Naive thymus-derived CD4-positive, alpha-beta T cell (primary cell): ENCODE measurements at regions of chr7 and their contacts with region 1.

Region 1: DNA sequence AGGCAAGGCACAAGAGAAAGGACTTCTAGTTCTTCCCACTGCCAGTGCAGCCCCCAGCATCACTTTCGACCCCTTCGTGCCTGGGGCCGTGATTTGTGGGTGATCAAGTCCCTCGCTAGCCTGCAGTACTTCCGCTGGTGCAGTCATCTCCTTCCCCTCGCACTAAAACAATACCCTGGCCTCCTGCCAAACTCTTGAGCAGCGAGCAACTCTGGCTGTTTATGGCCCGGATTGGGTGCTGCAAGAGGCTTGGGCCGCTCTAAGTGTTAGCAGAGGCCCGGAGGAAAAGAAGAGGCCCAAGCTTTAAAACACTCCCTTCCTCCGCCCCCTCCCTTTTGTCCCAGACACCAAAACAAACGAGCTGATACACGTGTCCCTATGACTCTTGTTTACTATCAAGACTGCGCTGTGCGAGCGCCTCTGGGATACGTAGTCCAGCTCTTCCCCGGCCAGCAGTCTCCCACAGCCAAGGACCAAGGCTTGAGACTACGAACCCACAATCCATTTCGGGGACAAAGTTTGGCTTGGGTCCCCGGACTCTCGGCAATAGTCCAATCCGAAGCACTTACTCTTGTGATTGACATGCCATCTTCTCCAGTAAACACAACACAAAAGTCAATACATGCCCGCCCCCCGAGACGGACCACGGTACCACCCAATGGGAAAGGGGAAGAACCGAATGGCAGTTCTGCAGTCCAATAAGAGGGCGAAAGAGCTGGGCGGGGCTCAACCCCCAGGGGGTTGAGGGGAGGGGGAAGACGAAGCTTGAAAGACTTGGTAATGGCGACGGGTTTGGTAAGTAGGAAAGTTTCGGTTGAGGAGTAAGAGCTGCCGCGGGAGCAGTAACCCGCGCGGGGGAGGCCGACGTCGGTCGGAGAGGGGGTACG is at the start of gene HBP1:
- DNase-seq: peak; percentile 80 to 100 (median 99)
- ATAC-seq: peak; percentile 87
- H3K4me3 ChIP-seq: peak within 1 kb of the TSS; percentile 84
- H3K4me3 Mint-ChIP-seq: peak within 1 kb of the TSS; percentile 92 to 100 (median 96)
- H3K27ac ChIP-seq: peak within 1 kb of the TSS; percentile 100
- H3K27ac Mint-ChIP-seq: peak within 1 kb of the TSS; percentile 98 to 100 (median 99)
- H3K4me1 ChIP-seq: peaks cover 28 to 35% of the 10 kb centered on the region in 2 donors
- H3K4me1 Mint-ChIP-seq: peaks cover 25 to 50% (median 41%) of the 10 kb centered on the region in 7 donors
- H3K27me3 ChIP-seq: no peaks in the 10 kb centered on the region
- H3K27me3 Mint-ChIP-seq: peaks cover 0 to 28% (median 0%) of the 10 kb centered on the region in 5 donors
- total RNA-seq, gene HBP1: 34.6 to 219 (median 124) TPM

Region 2: GRCh38 chr7:105487579-105488571 is 1680.6 kb before region 1 on chr7:
- CTCF ChIA-PET with region 1: no interaction called
- POLR2A ChIA-PET with region 1: no interaction called
- intact Hi-C with region 1: no loop called
- DNase-seq: peak in 4 of 9 donors; percentile 4 to 31 (median 19)
- ATAC-seq: no peak
- H3K4me3 ChIP-seq: no peak overlapping the region
- H3K4me3 Mint-ChIP-seq: no peak overlapping the region
- H3K27ac ChIP-seq: no peak overlapping the region
- H3K27ac Mint-ChIP-seq: peak overlapping the region in 1 of 9 donors; percentile 20
- H3K4me1 ChIP-seq: no peaks in the 10 kb centered on the region
- H3K4me1 Mint-ChIP-seq: peaks cover 0 to 8% (median 0%) of the 10 kb centered on the region in 7 donors
- H3K27me3 ChIP-seq: no peaks in the 10 kb centered on the region
- H3K27me3 Mint-ChIP-seq: no peaks in the 10 kb centered on the region

Region 3: DNA sequence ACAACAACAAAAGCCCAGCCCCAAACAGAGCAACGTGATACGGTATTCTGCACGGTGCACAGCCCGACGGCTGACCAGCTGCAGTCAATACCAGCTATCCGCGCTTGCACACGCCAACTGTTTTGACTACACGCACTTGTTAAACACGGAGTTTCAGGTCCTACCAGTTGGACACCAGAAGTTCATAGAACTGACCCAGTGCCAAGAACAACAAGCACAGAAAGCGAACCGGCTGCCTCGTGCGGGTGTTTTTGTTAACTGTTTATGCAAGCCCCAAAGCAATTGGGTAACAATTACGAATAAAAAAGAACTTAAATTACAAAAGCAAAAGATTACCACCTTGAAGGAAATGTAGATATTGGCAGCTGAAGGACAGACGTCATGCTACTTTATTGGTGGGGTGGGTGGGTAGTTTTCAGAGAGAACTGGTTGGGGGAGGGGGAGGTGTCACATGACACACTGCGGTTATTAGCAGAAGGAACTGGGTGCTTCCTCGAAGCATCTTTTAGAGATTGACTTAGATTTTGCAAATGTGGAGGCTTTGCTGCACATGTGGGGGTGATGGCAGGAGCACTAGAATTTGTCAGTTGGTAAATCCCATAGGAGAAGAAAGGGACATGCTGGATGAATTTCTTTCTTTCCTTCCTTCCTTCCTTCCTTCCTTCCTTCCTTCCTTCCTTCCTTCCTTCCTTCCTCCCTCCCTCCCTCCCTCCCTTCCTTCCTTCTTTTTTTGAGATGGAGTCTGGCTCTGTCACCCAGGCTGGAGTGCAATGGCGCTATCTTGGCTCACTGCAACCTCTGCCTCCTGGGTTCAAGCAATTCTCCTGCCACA is 1476.5 kb before region 1 on chr7:
- CTCF ChIA-PET with region 1: no interaction called
- POLR2A ChIA-PET with region 1: interaction called, 4 read pairs
- intact Hi-C with region 1: loop called in 1 of 2 experiments (anchors 2 kb)
- DNase-seq: peak; percentile 22 to 94 (median 90)
- ATAC-seq: peak; percentile 89
- H3K4me3 ChIP-seq: peak overlapping the region; percentile 94
- H3K4me3 Mint-ChIP-seq: peak overlapping the region; percentile 84 to 98 (median 92)
- H3K27ac ChIP-seq: peak overlapping the region; percentile 83
- H3K27ac Mint-ChIP-seq: peak overlapping the region; percentile 95 to 100 (median 99)
- H3K4me1 ChIP-seq: peaks cover 19 to 21% of the 10 kb centered on the region in 2 donors
- H3K4me1 Mint-ChIP-seq: peaks cover 33 to 78% (median 65%) of the 10 kb centered on the region in 7 donors
- H3K27me3 ChIP-seq: no peaks in the 10 kb centered on the region
- H3K27me3 Mint-ChIP-seq: no peaks in the 10 kb centered on the region

Region 4: GRCh38 chr7:106598663-106599342 is 569.7 kb before region 1 on chr7:
- CTCF ChIA-PET with region 1: no interaction called
- POLR2A ChIA-PET with region 1: interaction called, 4 read pairs
- intact Hi-C with region 1: loop called (anchors 2 to 5 kb)
- DNase-seq: peak; percentile 19 to 80 (median 72)
- ATAC-seq: peak; percentile 100
- H3K4me3 ChIP-seq: no peak overlapping the region
- H3K4me3 Mint-ChIP-seq: peak overlapping the region in 8 of 10 donors; percentile 18 to 75 (median 66)
- H3K27ac ChIP-seq: no peak overlapping the region
- H3K27ac Mint-ChIP-seq: peak overlapping the region in 5 of 9 donors; percentile 52 to 69 (median 58)
- H3K4me1 ChIP-seq: no peaks in the 10 kb centered on the region
- H3K4me1 Mint-ChIP-seq: peaks cover 0 to 9% (median 6%) of the 10 kb centered on the region in 7 donors
- H3K27me3 ChIP-seq: no peaks in the 10 kb centered on the region
- H3K27me3 Mint-ChIP-seq: peaks cover 0 to 14% (median 5%) of the 10 kb centered on the region in 5 donors

Region 5: DNA sequence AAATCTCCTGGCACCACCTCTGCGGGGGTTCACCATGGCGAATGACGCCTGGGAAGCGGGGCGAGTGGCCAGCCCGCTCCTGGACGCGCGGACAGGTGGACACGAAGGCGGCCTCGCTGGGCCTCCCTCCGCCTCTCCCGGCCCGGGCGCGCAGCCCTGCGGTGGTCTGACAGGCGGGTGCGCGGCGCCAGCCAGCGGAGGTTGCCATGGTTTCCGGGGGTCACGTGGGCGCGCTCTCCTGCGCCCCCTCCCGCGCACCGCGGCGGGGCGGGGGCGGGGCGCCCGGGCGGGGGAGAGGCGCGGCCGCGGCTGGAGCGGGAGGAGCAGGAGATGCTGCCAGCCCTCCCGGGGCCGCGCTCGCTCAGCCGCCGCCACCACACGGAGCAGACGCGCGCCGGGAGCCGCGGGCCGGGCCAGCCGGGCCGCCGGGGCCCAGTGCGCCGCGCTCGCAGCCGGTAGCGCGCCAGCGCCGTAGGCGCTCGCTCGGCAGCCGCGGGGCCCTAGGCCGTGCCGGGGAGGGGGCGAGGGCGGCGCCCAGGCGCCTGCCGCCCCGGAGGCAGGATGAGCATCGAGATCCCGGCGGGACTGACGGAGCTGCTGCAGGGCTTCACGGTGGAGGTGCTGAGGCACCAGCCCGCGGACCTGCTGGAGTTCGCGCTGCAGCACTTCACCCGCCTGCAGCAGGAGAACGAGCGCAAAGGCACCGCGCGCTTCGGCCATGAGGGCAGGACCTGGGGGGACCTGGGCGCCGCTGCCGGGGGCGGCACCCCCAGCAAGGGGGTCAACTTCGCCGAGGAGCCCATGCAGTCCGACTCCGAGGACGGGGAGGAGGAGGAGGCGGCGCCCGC is 123.9 kb before region 1 on chr7 and contains the start of gene PRKAR2B:
- CTCF ChIA-PET with region 1: no interaction called
- POLR2A ChIA-PET with region 1: no interaction called
- intact Hi-C with region 1: loop called (anchors 1 kb)
- DNase-seq: peak; percentile 69 to 81 (median 79)
- ATAC-seq: peak; percentile 96
- H3K4me3 ChIP-seq: peak within 1 kb of the TSS; percentile 53
- H3K4me3 Mint-ChIP-seq: peak within 1 kb of the TSS; percentile 78 to 96 (median 90)
- H3K27ac ChIP-seq: peak within 1 kb of the TSS; percentile 33
- H3K27ac Mint-ChIP-seq: peak within 1 kb of the TSS in 7 of 9 donors; percentile 48 to 89 (median 77)
- H3K4me1 ChIP-seq: peaks cover 4 to 10% of the 10 kb centered on the region in 2 donors
- H3K4me1 Mint-ChIP-seq: peaks cover 11 to 19% (median 15%) of the 10 kb centered on the region in 7 donors
- H3K27me3 ChIP-seq: peaks cover 4 to 8% of the 10 kb centered on the region in 2 donors
- H3K27me3 Mint-ChIP-seq: peaks cover 13 to 47% (median 29%) of the 10 kb centered on the region in 5 donors
- total RNA-seq, gene PRKAR2B: 0.43 to 5.0 (median 0.67) TPM

Region 6: DNA sequence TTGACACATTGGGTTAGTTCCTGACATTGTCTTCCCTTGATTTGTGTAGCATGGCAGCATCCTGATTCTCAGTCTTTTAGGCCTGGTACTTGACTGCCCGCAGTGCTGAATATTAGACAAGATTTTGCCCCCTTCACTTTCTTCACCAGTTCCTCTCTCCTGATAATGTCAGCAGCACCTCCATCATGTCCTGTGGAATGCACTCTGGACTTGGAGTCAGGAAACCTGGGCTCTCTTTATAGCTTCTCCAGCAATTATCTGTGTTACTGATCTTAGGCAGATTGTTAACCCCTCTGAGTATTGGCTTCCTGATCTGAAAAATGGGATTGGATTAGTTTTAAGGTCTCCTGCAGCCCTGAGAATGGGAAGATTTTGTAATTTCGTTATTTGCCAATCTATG is 19.3 kb after region 1 on chr7:
- CTCF ChIA-PET with region 1: interaction called, 3 read pairs
- POLR2A ChIA-PET with region 1: interaction called, 54 read pairs
- intact Hi-C with region 1: no loop called
- DNase-seq: no peak
- ATAC-seq: peak; percentile 16
- H3K4me3 ChIP-seq: no peak overlapping the region
- H3K4me3 Mint-ChIP-seq: no peak overlapping the region
- H3K27ac ChIP-seq: no peak overlapping the region
- H3K27ac Mint-ChIP-seq: peak overlapping the region in 5 of 9 donors; percentile 3 to 75 (median 6)
- H3K4me1 ChIP-seq: no peaks in the 10 kb centered on the region
- H3K4me1 Mint-ChIP-seq: peaks cover 0 to 44% (median 28%) of the 10 kb centered on the region in 7 donors
- H3K27me3 ChIP-seq: no peaks in the 10 kb centered on the region
- H3K27me3 Mint-ChIP-seq: no peaks in the 10 kb centered on the region

Region 7: DNA sequence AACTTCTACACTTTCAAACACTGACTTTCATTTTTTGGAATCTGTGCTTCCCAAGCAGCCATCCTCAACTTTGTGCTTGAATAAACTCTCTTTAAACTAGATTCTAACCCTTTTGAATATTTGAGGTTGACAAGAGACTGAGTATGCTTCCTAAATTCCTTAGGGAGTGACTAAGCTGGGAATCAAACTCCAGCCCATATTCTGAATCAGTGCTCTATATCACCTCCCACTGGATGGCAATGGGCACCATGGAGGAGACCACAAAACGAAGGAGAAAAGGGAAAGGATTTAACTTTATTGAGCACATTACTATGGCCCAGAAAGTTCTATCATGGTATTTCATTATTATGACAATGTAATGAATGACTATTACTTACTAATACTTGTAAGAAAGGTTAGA is 474.9 kb after region 1 on chr7:
- CTCF ChIA-PET with region 1: no interaction called
- POLR2A ChIA-PET with region 1: no interaction called
- intact Hi-C with region 1: no loop called
- DNase-seq: no peak
- ATAC-seq: no peak
- H3K4me3 ChIP-seq: no peak overlapping the region
- H3K4me3 Mint-ChIP-seq: no peak overlapping the region
- H3K27ac ChIP-seq: no peak overlapping the region
- H3K27ac Mint-ChIP-seq: no peak overlapping the region
- H3K4me1 ChIP-seq: no peaks in the 10 kb centered on the region
- H3K4me1 Mint-ChIP-seq: peaks cover 0 to 44% (median 0%) of the 10 kb centered on the region in 7 donors
- H3K27me3 ChIP-seq: no peaks in the 10 kb centered on the region
- H3K27me3 Mint-ChIP-seq: peaks cover 0 to 15% (median 11%) of the 10 kb centered on the region in 5 donors

Region 8: DNA sequence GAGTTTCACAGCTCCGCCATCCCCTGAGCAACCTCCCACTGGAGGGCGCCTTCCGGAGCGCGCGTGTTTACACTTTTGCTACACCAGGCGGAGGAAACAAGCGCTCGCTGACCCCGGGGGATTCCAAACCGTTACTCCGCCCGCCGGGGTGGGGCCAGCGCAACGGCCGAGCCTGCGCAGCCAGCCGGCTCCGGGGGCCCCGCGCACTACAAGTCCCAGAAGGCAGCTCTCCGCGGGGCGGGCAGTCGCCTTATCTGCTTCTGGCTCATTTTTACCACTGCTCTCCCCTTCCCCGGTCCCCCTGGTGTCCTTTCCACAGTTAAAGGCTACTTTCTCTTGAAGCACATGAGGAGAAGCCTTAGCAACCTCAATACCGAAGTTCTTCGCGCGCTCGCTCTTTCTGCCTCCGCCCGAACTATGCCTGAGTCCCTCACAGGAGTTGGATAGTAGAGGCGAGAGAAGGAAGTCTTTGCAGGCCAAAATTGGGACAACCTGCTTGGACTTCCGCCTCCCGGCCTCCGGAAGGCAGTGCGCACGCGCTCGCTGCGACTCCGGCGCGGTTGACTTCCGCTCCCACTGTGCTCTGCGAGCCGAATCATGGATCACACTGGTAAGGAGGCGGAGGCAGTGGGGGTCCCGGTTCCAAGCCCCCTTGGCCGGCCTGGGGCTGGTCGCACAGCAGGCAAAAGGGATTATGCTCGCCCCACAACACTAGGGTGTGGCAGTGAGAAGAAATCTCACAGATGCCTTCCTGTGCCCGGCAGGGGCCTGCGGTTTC is 575.3 kb after region 1 on chr7 and contains the start of gene CBLL1:
- CTCF ChIA-PET with region 1: interaction called, 12 read pairs
- POLR2A ChIA-PET with region 1: interaction called, 79 read pairs
- intact Hi-C with region 1: loop called (anchors 1 kb)
- DNase-seq: peak; percentile 95 to 98 (median 97)
- ATAC-seq: peak; percentile 95
- H3K4me3 ChIP-seq: peak within 1 kb of the TSS; percentile 90
- H3K4me3 Mint-ChIP-seq: peak within 1 kb of the TSS; percentile 93 to 100 (median 98)
- H3K27ac ChIP-seq: peak within 1 kb of the TSS; percentile 99
- H3K27ac Mint-ChIP-seq: peak within 1 kb of the TSS; percentile 99 to 100 (median 100)
- H3K4me1 ChIP-seq: peaks cover 35 to 36% of the 10 kb centered on the region in 2 donors
- H3K4me1 Mint-ChIP-seq: peaks cover 28 to 58% (median 54%) of the 10 kb centered on the region in 7 donors
- H3K27me3 ChIP-seq: no peaks in the 10 kb centered on the region
- H3K27me3 Mint-ChIP-seq: peaks cover 0 to 3% (median 0%) of the 10 kb centered on the region in 5 donors
- total RNA-seq, gene CBLL1: 41.5 to 54.4 (median 51.1) TPM

Region 9: GRCh38 chr7:108037140-108037539 is 868.7 kb after region 1 on chr7:
- CTCF ChIA-PET with region 1: no interaction called
- POLR2A ChIA-PET with region 1: no interaction called
- intact Hi-C with region 1: no loop called
- DNase-seq: no peak
- ATAC-seq: no peak
- H3K4me3 ChIP-seq: no peak overlapping the region
- H3K4me3 Mint-ChIP-seq: no peak overlapping the region
- H3K27ac ChIP-seq: no peak overlapping the region
- H3K27ac Mint-ChIP-seq: no peak overlapping the region
- H3K4me1 ChIP-seq: no peaks in the 10 kb centered on the region
- H3K4me1 Mint-ChIP-seq: no peaks in the 10 kb centered on the region
- H3K27me3 ChIP-seq: no peaks in the 10 kb centered on the region
- H3K27me3 Mint-ChIP-seq: peaks cover 0 to 16% (median 8%) of the 10 kb centered on the region in 5 donors